CD4-positive, alpha-beta memory T cell (primary cell): ENCODE measurements at regions of chr5 and their contacts with region 1.

Region 1: GRCh38 chr5:81751009-81751835 is at the start of gene SSBP2:
- DNase-seq: peak; percentile 99 to 100 (median 100)
- H3K4me3 ChIP-seq: peak within 1 kb of the TSS in 1 of 2 donors; percentile 68
- H3K4me3 Mint-ChIP-seq: peak within 1 kb of the TSS; percentile 94 to 97 (median 96)
- H3K27ac ChIP-seq: peak within 1 kb of the TSS; percentile 75
- H3K27ac Mint-ChIP-seq: peak within 1 kb of the TSS; percentile 95 to 98 (median 96)
- H3K4me1 ChIP-seq: peaks cover 20% of the 10 kb centered on the region
- H3K4me1 Mint-ChIP-seq: peaks cover 15 to 39% (median 32%) of the 10 kb centered on the region in 4 donors
- H3K27me3 ChIP-seq: no peaks in the 10 kb centered on the region
- H3K27me3 Mint-ChIP-seq: peaks cover 0 to 2% of the 10 kb centered on the region in 2 donors
- total RNA-seq, gene SSBP2: 54.4 to 63.3 TPM

Region 2: DNA sequence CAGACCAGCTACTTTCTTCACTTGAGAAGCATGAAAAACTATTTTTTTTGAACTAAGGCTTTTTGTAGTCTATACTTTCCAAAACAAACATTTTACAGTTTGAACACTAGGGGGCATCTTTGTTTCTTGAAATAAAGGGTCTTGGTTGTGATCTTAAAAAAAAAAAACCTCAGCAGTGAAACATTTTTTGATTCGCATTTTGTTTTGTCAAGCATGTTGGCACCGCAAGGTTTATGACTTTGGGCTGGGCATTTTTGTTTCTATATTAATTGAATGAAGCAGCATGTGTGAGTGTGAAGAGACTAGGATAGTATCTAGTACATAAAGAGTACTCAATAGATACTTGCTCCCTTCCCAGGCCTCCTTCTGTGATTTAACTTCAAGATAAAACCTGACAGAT is 325.7 kb before region 1 on chr5:
- CTCF ChIA-PET with region 1: no interaction called
- POLR2A ChIA-PET with region 1: no interaction called
- intact Hi-C with region 1: loop called (anchors 2 kb)
- DNase-seq: peak in 4 of 5 donors; percentile 49 to 59 (median 56)
- H3K4me3 ChIP-seq: no peak overlapping the region
- H3K4me3 Mint-ChIP-seq: peak overlapping the region in 1 of 8 donors; percentile 58
- H3K27ac ChIP-seq: no peak overlapping the region
- H3K27ac Mint-ChIP-seq: peak overlapping the region in 4 of 7 donors; percentile 5 to 73 (median 7)
- H3K4me1 ChIP-seq: no peaks in the 10 kb centered on the region
- H3K4me1 Mint-ChIP-seq: peaks cover 3 to 7% (median 5%) of the 10 kb centered on the region in 4 donors
- H3K27me3 ChIP-seq: no peaks in the 10 kb centered on the region
- H3K27me3 Mint-ChIP-seq: no peaks in the 10 kb centered on the region

Region 3: GRCh38 chr5:81728301-81728700 is 22.9 kb before region 1 on chr5:
- CTCF ChIA-PET with region 1: no interaction called
- POLR2A ChIA-PET with region 1: interaction called, 3 read pairs
- intact Hi-C with region 1: loop called (anchors 2 kb)
- DNase-seq: no peak
- H3K4me3 ChIP-seq: no peak overlapping the region
- H3K4me3 Mint-ChIP-seq: no peak overlapping the region
- H3K27ac ChIP-seq: no peak overlapping the region
- H3K27ac Mint-ChIP-seq: no peak overlapping the region
- H3K4me1 ChIP-seq: no peaks in the 10 kb centered on the region
- H3K4me1 Mint-ChIP-seq: peaks cover 27 to 44% (median 38%) of the 10 kb centered on the region in 4 donors
- H3K27me3 ChIP-seq: no peaks in the 10 kb centered on the region
- H3K27me3 Mint-ChIP-seq: no peaks in the 10 kb centered on the region

Region 4: GRCh38 chr5:81819556-81820317 is 68.5 kb after region 1 on chr5:
- CTCF ChIA-PET with region 1: interaction called, 4 read pairs
- POLR2A ChIA-PET with region 1: interaction called, 22 read pairs
- intact Hi-C with region 1: no loop called
- DNase-seq: no peak
- H3K4me3 ChIP-seq: no peak overlapping the region
- H3K4me3 Mint-ChIP-seq: peak overlapping the region in 1 of 8 donors; percentile 5
- H3K27ac ChIP-seq: no peak overlapping the region
- H3K27ac Mint-ChIP-seq: peak overlapping the region in 6 of 7 donors; percentile 2 to 72 (median 20)
- H3K4me1 ChIP-seq: peaks cover 16% of the 10 kb centered on the region
- H3K4me1 Mint-ChIP-seq: peaks cover 19 to 51% (median 39%) of the 10 kb centered on the region in 4 donors
- H3K27me3 ChIP-seq: no peaks in the 10 kb centered on the region
- H3K27me3 Mint-ChIP-seq: peaks cover 2% of the 10 kb centered on the region in 2 donors

Region 5: DNA sequence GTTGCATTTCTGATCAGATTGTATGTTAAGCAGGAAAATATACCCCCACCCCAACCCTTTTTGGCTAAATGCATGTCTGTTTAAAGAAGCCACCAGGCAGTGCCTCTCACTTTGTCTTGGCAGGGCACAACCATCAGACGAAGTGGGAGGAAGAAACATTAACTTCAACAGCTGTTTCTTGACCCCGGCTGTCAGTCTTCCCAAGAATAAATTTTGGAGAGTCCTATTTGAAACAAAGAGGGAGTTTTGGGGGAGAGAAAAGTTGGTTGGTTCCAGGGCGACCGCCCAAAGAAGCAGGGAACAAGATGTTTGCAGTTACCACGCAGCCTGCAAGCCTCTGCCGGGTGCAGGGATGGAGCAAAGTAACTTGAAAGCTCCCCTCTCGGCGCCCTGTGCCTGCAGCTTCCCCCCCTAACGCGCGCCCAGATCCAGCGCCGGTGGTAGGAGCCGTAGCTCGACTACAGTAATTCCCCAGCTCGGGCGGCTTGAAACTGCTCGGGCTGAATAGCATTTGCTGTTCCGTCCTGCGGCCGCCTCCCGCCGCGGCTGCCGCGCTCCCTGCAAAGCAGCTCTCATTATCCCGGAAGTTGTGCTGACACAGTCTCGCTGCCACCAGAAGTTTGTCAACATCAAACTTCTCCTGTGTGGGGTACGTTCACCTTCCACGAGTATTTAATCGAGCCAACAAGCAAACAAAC is 100.4 kb after region 1 on chr5:
- CTCF ChIA-PET with region 1: interaction called, 53 read pairs
- POLR2A ChIA-PET with region 1: interaction called, 475 read pairs
- intact Hi-C with region 1: loop called (anchors 1 kb)
- DNase-seq: peak; percentile 88 to 92 (median 90)
- H3K4me3 ChIP-seq: peak overlapping the region in 1 of 2 donors; percentile 56
- H3K4me3 Mint-ChIP-seq: peak overlapping the region; percentile 94 to 99 (median 96)
- H3K27ac ChIP-seq: peak overlapping the region; percentile 64
- H3K27ac Mint-ChIP-seq: peak overlapping the region; percentile 94 to 99 (median 97)
- H3K4me1 ChIP-seq: peaks cover 31% of the 10 kb centered on the region
- H3K4me1 Mint-ChIP-seq: peaks cover 31 to 56% (median 42%) of the 10 kb centered on the region in 4 donors
- H3K27me3 ChIP-seq: no peaks in the 10 kb centered on the region
- H3K27me3 Mint-ChIP-seq: no peaks in the 10 kb centered on the region

Region 6: DNA sequence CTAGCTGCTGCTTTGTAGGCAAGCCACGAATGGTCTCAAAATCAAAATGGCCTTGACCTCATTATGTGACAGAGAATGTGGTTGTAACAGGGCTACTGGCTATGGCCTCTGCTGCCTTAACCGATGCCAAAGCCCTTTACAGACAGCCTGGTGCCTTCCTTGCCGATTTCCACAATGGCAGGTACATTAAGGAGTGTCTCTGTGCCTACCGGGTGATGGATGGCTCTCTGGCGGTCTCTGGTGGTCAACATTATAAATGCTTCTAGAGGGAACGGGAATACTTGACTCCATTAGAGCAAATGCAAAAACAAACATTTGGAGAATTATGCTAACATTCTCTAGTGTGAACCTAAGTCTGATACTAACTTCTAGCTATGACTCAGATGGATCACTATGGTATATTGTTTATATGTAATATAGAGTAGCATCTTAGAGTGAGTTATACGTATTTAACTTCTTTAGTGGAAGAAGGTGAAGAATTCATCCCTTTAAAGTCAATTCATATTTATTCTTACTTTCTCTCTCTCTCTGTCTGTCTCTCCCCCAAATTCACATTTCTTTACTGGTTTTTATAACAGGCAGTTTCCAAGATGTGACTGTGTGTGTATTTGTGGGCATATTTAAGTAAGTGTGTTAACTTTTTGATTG is 474.4 kb after region 1 on chr5:
- CTCF ChIA-PET with region 1: no interaction called
- POLR2A ChIA-PET with region 1: no interaction called
- intact Hi-C with region 1: loop called (anchors 2 kb)
- DNase-seq: peak; percentile 58 to 65 (median 63)
- H3K4me3 ChIP-seq: no peak overlapping the region
- H3K4me3 Mint-ChIP-seq: peak overlapping the region in 1 of 8 donors; percentile 51
- H3K27ac ChIP-seq: no peak overlapping the region
- H3K27ac Mint-ChIP-seq: peak overlapping the region in 2 of 7 donors; percentile 4 to 43
- H3K4me1 ChIP-seq: no peaks in the 10 kb centered on the region
- H3K4me1 Mint-ChIP-seq: peaks cover 3 to 14% (median 5%) of the 10 kb centered on the region in 4 donors
- H3K27me3 ChIP-seq: no peaks in the 10 kb centered on the region
- H3K27me3 Mint-ChIP-seq: no peaks in the 10 kb centered on the region